ENCODE measurements at regions of chr4 and their contacts with region 1.

Region 1: GRCh38 chr4:119314356-119314755 is 7.6 kb downstream of the FABP2 start:
- DNase-seq: peak; percentile 53
- H3K4me3 ChIP-seq: no peak overlapping the region
- H3K27ac ChIP-seq: no peak overlapping the region
- H3K4me1 ChIP-seq: no peaks in the 10 kb centered on the region
- H3K27me3 ChIP-seq: peaks cover 5 to 15% of the 10 kb centered on the region in 2 experiments
- CTCF ChIP-seq: peak; percentile 23 to 41
- POLR2A ChIP-seq: no peak

Region 2: DNA sequence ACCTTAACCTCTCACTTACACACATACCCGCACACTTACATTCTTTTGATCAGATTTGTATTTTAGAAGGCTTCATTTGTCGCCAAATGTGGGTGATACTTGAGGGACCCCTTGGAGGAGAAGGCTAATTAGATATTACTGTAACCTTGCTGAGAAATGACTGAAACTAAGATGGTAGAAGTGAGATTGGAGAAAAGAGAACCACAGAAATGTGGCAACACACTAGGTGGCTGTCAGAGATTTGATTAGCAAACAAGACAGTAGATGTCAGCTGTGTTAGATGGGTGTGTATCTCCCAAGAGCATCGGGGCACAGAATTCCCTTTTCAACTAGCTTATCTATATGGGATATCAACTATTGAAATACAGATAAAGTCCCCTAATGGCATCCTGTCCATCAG is 156.9 kb after region 1 on chr4:
- CTCF ChIA-PET with region 1: no interaction called
- POLR2A ChIA-PET with region 1: no interaction called
- dilution Hi-C with region 1: no loop called
- intact Hi-C with region 1: no loop called
- DNase-seq: no peak
- H3K4me3 ChIP-seq: no peak overlapping the region
- H3K27ac ChIP-seq: no peak overlapping the region
- H3K4me1 ChIP-seq: no peaks in the 10 kb centered on the region
- H3K27me3 ChIP-seq: no peaks in the 10 kb centered on the region
- CTCF ChIP-seq: no peak
- POLR2A ChIP-seq: no peak

Region 3: DNA sequence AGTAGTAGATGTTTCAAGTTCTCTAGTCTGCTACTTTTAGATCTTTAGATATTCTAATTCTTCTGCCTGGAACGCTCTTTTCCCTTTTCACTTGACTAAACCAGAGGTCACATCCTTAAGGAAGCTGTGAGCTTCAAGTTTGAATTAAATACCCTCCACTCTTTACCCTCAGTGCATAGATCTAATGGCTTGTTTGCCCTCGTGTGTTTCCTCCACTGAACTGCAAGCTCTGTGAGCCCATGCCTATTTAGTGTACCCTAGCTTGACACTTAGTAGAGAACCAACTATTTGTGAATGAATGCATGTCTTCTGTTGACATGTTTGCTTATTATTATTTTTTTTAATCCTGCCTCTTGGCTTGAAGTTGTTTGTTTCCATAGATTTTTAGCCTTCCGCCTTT is 176.0 kb after region 1 on chr4:
- CTCF ChIA-PET with region 1: interaction called, 10 read pairs
- POLR2A ChIA-PET with region 1: no interaction called
- dilution Hi-C with region 1: no loop called
- intact Hi-C with region 1: loop called (anchors 1 kb)
- DNase-seq: peak; percentile 72
- H3K4me3 ChIP-seq: no peak overlapping the region
- H3K27ac ChIP-seq: no peak overlapping the region
- H3K4me1 ChIP-seq: no peaks in the 10 kb centered on the region
- H3K27me3 ChIP-seq: no peaks in the 10 kb centered on the region
- CTCF ChIP-seq: peak; percentile 11 to 53
- POLR2A ChIP-seq: no peak

Region 4: DNA sequence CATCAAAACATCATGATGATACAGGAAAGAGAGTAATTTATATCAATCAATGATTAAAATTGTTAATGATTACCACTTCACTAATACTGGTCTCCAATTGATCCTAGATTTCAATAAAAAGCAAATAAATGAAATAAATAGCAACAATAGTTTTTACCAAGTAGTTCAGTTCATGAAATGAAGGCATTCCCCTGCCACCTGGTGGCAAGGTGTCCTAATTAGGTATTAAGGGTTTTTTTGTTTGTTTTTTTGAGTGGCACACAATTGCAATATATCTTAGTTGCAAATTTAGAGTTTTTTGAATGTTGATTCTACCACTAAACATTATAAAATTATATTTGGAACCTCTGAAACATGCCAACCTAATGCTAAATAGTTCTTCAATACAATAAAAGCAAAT is 471.6 kb after region 1 on chr4:
- CTCF ChIA-PET with region 1: no interaction called
- POLR2A ChIA-PET with region 1: no interaction called
- dilution Hi-C with region 1: no loop called
- intact Hi-C with region 1: loop called (anchors 2 kb)
- DNase-seq: peak; percentile 20
- H3K4me3 ChIP-seq: no peak overlapping the region
- H3K27ac ChIP-seq: no peak overlapping the region
- H3K4me1 ChIP-seq: no peaks in the 10 kb centered on the region
- H3K27me3 ChIP-seq: peaks cover 2 to 4% of the 10 kb centered on the region in 2 experiments
- CTCF ChIP-seq: no peak
- POLR2A ChIP-seq: no peak

Region 5: GRCh38 chr4:120049732-120050494 is 735.6 kb after region 1 on chr4:
- CTCF ChIA-PET with region 1: interaction called, 3 read pairs
- POLR2A ChIA-PET with region 1: no interaction called
- dilution Hi-C with region 1: no loop called
- intact Hi-C with region 1: loop called (anchors 1 kb)
- DNase-seq: peak; percentile 76
- H3K4me3 ChIP-seq: no peak overlapping the region
- H3K27ac ChIP-seq: no peak overlapping the region
- H3K4me1 ChIP-seq: peaks cover 3% of the 10 kb centered on the region
- H3K27me3 ChIP-seq: no peaks in the 10 kb centered on the region
- CTCF ChIP-seq: peak; percentile 77 to 79
- POLR2A ChIP-seq: no peak

Measured in endothelial cell of umbilical vein (primary cell).